ENCODE measurements at regions of chr6 and their contacts with region 1.

Region 1: DNA sequence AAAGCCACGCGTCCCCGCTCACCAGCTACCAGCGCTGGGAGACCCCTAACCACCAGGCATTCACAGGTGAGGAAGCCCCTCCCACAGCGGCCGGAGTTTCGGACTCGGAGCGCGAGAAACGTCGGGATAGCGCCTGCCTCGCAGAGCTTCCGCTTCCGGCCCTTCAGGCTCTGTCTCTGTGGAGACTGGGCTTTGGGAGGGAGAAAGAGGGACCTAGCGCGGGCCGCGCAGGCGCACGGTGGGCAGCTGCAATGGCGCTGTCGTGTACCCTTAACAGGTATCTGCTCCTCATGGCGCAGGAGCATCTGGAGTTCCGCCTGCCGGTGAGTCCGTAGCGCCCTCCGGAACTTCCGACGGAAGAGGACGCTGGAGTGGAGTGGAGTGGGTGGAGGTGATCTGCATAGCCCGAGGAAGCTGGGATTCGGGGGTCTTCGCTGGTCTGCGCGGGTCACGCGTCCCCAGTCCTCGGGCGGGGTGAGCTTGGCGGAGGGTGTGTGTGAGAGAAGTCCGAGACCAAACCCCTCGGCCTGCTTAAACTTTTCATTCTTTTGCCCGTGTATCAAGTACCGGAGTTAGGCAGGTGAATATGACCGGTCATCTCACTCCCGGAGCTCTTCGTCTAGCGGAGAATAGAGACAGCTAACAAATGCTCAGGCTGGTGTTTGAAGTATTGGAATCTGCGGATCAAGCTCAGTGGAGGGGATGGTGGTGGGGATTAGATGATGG is at the start of gene TRMT11:
- DNase-seq: peak; percentile 86
- CTCF ChIP-seq: no peak

Region 2: GRCh38 chr6:127146932-127147331 is 1160.5 kb after region 1 on chr6:
- in situ Hi-C with region 1: loop called (anchors 25 kb)
- DNase-seq: no peak
- CTCF ChIP-seq: no peak